CD8-positive, alpha-beta T cell (primary cell): ENCODE measurements at regions of chr2 and their contacts with region 1.

Region 1: DNA sequence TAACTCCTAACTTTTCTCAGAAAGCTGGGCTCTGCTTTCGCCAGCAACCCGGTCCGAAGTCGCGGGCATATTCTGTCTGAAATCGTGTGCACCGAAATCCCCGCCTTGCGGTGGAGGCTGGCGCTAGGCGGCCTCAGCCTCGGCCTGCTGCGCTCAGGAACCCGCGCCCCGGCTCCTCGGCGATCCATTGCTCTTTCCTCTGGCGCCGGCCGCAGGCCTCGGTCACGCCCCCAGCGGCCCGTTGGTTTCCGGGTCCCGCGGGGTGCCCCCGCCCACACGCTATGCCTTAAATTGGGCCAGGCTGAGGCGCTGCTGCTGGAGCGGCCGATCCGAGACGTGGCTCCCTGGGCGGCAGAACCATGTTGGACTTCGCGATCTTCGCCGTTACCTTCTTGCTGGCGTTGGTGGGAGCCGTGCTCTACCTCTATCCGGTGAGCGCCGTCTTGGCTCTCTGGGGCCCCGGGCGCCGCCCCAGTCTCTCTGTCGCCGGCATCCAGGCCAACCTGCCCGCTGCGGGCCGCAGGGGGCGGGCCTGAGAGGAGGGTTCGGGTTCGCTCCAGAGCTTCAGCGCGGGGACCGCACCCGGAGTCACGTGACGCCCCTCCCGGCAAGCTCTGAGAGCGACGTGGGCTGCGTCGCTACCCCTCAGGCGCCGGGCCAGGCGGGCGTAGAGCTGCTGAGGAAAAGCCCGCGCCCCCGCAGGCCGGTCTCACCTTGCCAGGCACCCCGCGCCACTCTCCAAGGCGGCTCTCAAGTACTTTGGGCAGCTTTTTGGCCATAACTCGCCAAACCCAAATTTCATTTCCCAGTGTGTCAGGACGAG is at the start of gene CYP20A1:
- DNase-seq: peak; percentile 95 to 98 (median 97)
- ATAC-seq: peak; percentile 81
- H3K4me3 ChIP-seq: peak within 1 kb of the TSS; percentile 88 to 89
- H3K4me3 Mint-ChIP-seq: peak within 1 kb of the TSS; percentile 99
- H3K27ac ChIP-seq: peak within 1 kb of the TSS; percentile 92 to 98
- H3K27ac Mint-ChIP-seq: peak within 1 kb of the TSS; percentile 100
- H3K4me1 ChIP-seq: peaks cover 15% of the 10 kb centered on the region
- H3K4me1 Mint-ChIP-seq: peaks cover 30% of the 10 kb centered on the region
- H3K27me3 ChIP-seq: no peaks in the 10 kb centered on the region
- H3K27me3 Mint-ChIP-seq: no peaks in the 10 kb centered on the region
- CTCF ChIP-seq: no peak
- total RNA-seq, gene CYP20A1: 22.6 to 24.6 TPM

Region 2: DNA sequence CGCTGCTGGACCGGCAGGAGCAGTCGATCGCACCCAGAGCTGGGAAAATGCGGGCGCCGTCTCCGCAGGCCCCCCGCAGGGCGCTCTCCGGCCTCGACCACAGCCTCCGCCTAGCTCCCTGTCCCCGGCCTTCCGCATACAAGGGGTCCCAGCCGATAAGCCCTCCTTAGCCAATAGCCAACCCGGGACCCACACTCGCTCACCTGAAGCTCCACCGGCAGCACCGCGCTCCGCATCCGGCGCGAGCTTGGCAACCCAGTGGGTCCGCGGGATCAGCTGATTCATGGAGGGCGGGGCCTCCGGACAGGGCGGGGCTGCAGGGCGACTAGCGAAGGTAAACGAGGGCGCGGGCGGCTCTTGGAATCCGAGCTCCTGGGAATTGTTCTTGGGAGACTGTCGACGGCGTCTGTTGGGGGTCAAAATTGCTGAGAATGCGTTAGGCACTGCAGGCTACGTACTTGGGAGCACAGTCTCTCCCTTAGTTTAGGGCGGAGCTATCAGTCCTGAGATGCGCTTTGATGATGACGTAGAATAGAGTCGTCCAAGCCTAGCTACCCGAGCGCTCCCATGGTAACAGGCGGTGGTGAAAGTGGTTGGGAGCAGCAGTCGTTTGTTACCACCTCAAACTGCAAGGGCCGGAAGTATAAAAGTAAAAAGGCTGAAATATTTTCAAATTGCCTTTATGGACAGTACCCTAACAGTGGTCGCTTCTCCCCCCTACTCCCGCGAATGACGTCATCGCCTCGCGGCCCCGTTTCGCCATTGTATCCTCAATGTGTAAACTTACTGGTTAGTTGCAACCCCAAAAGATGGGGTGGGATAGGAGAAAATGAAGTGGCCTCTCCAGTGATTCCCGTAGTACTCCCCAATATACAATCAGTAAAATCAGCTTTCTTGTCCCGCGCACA is 1458.0 kb before region 1 on chr2 and contains the start of gene ALS2:
- CTCF ChIA-PET with region 1: no interaction called
- POLR2A ChIA-PET with region 1: no interaction called
- intact Hi-C with region 1: loop called in 1 of 2 experiments (anchors 5 kb)
- DNase-seq: peak; percentile 88 to 97 (median 94)
- ATAC-seq: peak; percentile 91
- H3K4me3 ChIP-seq: peak within 1 kb of the TSS; percentile 80 to 89
- H3K4me3 Mint-ChIP-seq: peak within 1 kb of the TSS; percentile 98
- H3K27ac ChIP-seq: peak within 1 kb of the TSS; percentile 94
- H3K27ac Mint-ChIP-seq: peak within 1 kb of the TSS; percentile 98
- H3K4me1 ChIP-seq: peaks cover 16% of the 10 kb centered on the region
- H3K4me1 Mint-ChIP-seq: peaks cover 27% of the 10 kb centered on the region
- H3K27me3 ChIP-seq: no peaks in the 10 kb centered on the region
- H3K27me3 Mint-ChIP-seq: peaks cover 3% of the 10 kb centered on the region
- CTCF ChIP-seq: no peak
- total RNA-seq, gene ALS2: 6.6 to 9.0 TPM

Region 3: DNA sequence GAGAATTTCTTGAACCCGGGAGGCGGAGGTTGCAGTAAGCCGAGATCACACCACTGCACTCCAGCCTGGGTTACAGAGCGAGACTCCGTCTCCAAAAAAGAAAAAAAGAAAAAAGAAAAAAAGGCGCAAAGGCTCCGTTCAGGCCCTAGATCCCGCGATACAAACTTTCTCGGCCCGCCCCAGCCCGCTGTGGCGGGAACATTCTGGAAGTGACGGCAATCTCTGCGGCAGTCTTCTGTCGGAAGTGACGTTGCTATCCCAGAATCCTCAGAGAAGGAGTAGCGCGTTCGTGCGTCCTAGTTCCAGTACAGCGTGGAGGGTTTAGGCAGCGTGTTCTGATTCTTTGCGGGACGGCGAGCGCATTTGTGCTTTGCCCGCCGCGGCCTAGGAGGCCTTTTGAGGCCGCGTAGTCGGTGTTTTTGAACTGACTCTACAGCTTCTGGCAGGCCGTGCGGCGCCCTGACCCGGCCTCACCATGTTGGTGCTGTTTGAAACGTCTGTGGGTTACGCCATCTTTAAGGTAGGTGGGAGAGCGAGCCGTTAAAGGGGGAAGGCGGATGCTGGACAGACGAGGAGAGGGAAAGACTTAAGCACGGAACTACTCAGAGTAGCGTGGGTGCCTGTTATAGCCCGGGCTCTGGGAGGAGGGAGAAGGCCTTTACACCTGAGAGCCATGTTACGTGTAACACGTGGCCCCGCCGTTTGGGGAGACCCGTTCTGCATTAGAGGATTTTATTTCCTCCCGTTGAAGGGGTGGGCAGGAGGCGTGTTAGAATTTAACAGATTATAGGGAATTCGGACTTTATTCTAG is 973.2 kb before region 1 on chr2 and contains the start of gene NOP58:
- CTCF ChIA-PET with region 1: no interaction called
- POLR2A ChIA-PET with region 1: interaction called, 3 read pairs
- intact Hi-C with region 1: loop called in 1 of 2 experiments (anchors 10 kb)
- DNase-seq: peak; percentile 80 to 97 (median 87)
- ATAC-seq: peak; percentile 75
- H3K4me3 ChIP-seq: peak within 1 kb of the TSS; percentile 80 to 100
- H3K4me3 Mint-ChIP-seq: peak within 1 kb of the TSS; percentile 52
- H3K27ac ChIP-seq: peak within 1 kb of the TSS; percentile 97 to 98
- H3K27ac Mint-ChIP-seq: peak within 1 kb of the TSS; percentile 43
- H3K4me1 ChIP-seq: peaks cover 18% of the 10 kb centered on the region
- H3K4me1 Mint-ChIP-seq: peaks cover 21% of the 10 kb centered on the region
- H3K27me3 ChIP-seq: no peaks in the 10 kb centered on the region
- H3K27me3 Mint-ChIP-seq: no peaks in the 10 kb centered on the region
- CTCF ChIP-seq: no peak
- total RNA-seq, gene NOP58: 345 to 352 TPM

Region 4: DNA sequence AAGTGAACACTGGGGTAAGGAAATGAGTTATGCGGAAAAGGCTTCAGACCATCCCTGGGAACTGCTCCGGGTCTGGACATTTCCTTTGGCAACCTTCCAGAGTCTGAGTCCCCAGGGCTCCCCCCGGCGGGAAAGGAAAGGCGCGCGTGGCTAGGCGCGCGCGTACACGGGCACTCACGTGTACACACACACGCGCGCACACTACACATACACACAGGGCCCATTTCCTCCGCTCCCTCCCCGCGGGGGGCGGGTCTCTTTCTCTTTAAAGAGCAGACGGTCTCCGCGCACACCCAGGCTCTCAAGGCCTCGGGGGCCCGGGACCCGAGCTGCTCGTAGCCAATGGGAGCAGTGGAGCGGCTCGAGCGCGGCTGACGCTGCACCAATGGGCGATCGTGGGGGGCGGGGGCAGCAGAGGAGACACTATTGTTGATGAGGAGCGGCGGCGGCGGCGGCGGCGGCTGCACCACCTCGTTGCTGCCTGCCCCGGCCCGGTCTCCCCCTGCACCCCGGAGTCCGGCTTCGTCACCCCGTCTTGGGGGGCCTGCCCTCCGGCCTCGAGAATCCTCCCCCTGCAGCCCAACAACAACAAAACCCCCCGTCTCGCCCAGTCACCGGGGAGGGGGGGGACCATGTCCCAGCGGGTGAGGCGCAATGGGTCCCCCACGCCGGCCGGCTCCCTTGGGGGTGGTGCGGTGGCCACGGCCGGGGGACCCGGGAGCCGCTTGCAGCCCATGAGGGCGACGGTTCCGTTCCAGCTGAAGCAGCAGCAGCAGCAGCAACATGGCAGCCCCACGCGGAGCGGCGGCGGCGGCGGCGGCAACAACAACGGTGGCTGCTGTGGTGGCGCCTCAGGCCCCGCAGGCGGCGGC is 604.1 kb before region 1 on chr2 and contains the start of gene FAM117B:
- CTCF ChIA-PET with region 1: no interaction called
- POLR2A ChIA-PET with region 1: interaction called, 12 read pairs
- intact Hi-C with region 1: no loop called
- DNase-seq: peak; percentile 97 to 99 (median 98)
- ATAC-seq: peak; percentile 87
- H3K4me3 ChIP-seq: peak within 1 kb of the TSS; percentile 77 to 87
- H3K4me3 Mint-ChIP-seq: peak within 1 kb of the TSS; percentile 98
- H3K27ac ChIP-seq: peak within 1 kb of the TSS; percentile 76 to 89
- H3K27ac Mint-ChIP-seq: peak within 1 kb of the TSS; percentile 99
- H3K4me1 ChIP-seq: peaks cover 29% of the 10 kb centered on the region
- H3K4me1 Mint-ChIP-seq: peaks cover 52% of the 10 kb centered on the region
- H3K27me3 ChIP-seq: no peaks in the 10 kb centered on the region
- H3K27me3 Mint-ChIP-seq: no peaks in the 10 kb centered on the region
- CTCF ChIP-seq: no peak
- total RNA-seq, gene FAM117B: 40.0 to 45.8 TPM

Region 5: DNA sequence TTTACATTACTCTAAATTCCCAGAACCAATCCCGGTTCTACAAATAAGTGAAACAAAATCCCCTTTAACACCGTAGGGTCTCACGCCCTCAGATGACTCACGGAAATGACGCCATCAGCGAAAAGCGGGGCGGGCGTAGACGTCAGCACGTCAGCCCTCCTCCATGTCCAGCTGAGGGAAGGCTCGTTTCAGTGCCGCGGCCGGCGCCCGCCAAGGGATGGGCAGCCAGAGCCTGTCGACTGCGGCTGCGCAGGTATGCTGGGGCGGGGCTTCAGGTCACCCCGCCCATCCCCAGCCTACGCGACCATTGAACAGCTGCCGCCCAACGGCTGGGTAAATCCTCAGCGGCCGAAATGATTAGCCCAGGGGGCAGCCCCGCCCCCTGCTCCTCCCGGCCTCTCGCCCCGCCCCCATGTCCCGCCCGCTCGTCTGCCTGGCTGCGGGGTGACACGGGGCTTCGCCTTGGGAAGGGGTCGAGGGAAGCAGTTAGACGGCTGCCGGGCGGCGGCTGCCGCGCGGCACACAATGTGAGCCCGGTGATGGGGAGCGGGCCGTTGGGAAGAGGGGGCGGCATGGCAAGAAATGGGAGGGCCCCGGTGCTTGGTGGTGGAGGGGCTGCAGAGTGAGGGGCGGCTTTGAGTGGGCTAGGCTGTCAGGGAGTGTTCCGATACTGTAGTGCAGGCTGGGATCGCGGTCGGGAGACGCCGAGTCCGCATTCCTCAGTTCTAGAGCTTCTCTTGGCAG is 224.3 kb before region 1 on chr2 and contains the start of gene NBEAL1:
- CTCF ChIA-PET with region 1: no interaction called
- POLR2A ChIA-PET with region 1: interaction called, 8 read pairs
- intact Hi-C with region 1: loop called in 1 of 2 experiments (anchors 1 kb)
- DNase-seq: peak; percentile 92 to 99 (median 95)
- ATAC-seq: peak; percentile 90
- H3K4me3 ChIP-seq: peak within 1 kb of the TSS; percentile 77 to 97
- H3K4me3 Mint-ChIP-seq: peak within 1 kb of the TSS; percentile 88
- H3K27ac ChIP-seq: peak within 1 kb of the TSS; percentile 86 to 89
- H3K27ac Mint-ChIP-seq: peak within 1 kb of the TSS; percentile 92
- H3K4me1 ChIP-seq: peaks cover 37% of the 10 kb centered on the region
- H3K4me1 Mint-ChIP-seq: peaks cover 46% of the 10 kb centered on the region
- H3K27me3 ChIP-seq: no peaks in the 10 kb centered on the region
- H3K27me3 Mint-ChIP-seq: no peaks in the 10 kb centered on the region
- CTCF ChIP-seq: no peak
- total RNA-seq, gene NBEAL1: 11.2 to 13.2 TPM

Region 6: GRCh38 chr2:203122301-203122986 is 116.5 kb before region 1 on chr2:
- CTCF ChIA-PET with region 1: no interaction called
- POLR2A ChIA-PET with region 1: no interaction called
- intact Hi-C with region 1: no loop called
- DNase-seq: peak in 2 of 9 experiments; percentile 1 to 8
- ATAC-seq: no peak
- H3K4me3 ChIP-seq: no peak overlapping the region
- H3K4me3 Mint-ChIP-seq: no peak overlapping the region
- H3K27ac ChIP-seq: no peak overlapping the region
- H3K27ac Mint-ChIP-seq: no peak overlapping the region
- H3K4me1 ChIP-seq: no peaks in the 10 kb centered on the region
- H3K4me1 Mint-ChIP-seq: no peaks in the 10 kb centered on the region
- H3K27me3 ChIP-seq: no peaks in the 10 kb centered on the region
- H3K27me3 Mint-ChIP-seq: no peaks in the 10 kb centered on the region
- CTCF ChIP-seq: no peak

Region 7: GRCh38 chr2:203209538-203209937 is 29.4 kb before region 1 on chr2:
- CTCF ChIA-PET with region 1: no interaction called
- POLR2A ChIA-PET with region 1: no interaction called
- intact Hi-C with region 1: no loop called
- DNase-seq: no peak
- ATAC-seq: no peak
- H3K4me3 ChIP-seq: no peak overlapping the region
- H3K4me3 Mint-ChIP-seq: no peak overlapping the region
- H3K27ac ChIP-seq: no peak overlapping the region
- H3K27ac Mint-ChIP-seq: no peak overlapping the region
- H3K4me1 ChIP-seq: peaks cover 3% of the 10 kb centered on the region
- H3K4me1 Mint-ChIP-seq: peaks cover 7% of the 10 kb centered on the region
- H3K27me3 ChIP-seq: no peaks in the 10 kb centered on the region
- H3K27me3 Mint-ChIP-seq: no peaks in the 10 kb centered on the region
- CTCF ChIP-seq: no peak

Region 8: GRCh38 chr2:203498161-203498560 is 259.2 kb after region 1 on chr2:
- CTCF ChIA-PET with region 1: no interaction called
- POLR2A ChIA-PET with region 1: no interaction called
- intact Hi-C with region 1: no loop called
- DNase-seq: peak in 1 of 9 experiments; percentile 23
- ATAC-seq: no peak
- H3K4me3 ChIP-seq: no peak overlapping the region
- H3K4me3 Mint-ChIP-seq: no peak overlapping the region
- H3K27ac ChIP-seq: no peak overlapping the region
- H3K27ac Mint-ChIP-seq: no peak overlapping the region
- H3K4me1 ChIP-seq: no peaks in the 10 kb centered on the region
- H3K4me1 Mint-ChIP-seq: peaks cover 16% of the 10 kb centered on the region
- H3K27me3 ChIP-seq: no peaks in the 10 kb centered on the region
- H3K27me3 Mint-ChIP-seq: no peaks in the 10 kb centered on the region
- CTCF ChIP-seq: no peak

Region 9: DNA sequence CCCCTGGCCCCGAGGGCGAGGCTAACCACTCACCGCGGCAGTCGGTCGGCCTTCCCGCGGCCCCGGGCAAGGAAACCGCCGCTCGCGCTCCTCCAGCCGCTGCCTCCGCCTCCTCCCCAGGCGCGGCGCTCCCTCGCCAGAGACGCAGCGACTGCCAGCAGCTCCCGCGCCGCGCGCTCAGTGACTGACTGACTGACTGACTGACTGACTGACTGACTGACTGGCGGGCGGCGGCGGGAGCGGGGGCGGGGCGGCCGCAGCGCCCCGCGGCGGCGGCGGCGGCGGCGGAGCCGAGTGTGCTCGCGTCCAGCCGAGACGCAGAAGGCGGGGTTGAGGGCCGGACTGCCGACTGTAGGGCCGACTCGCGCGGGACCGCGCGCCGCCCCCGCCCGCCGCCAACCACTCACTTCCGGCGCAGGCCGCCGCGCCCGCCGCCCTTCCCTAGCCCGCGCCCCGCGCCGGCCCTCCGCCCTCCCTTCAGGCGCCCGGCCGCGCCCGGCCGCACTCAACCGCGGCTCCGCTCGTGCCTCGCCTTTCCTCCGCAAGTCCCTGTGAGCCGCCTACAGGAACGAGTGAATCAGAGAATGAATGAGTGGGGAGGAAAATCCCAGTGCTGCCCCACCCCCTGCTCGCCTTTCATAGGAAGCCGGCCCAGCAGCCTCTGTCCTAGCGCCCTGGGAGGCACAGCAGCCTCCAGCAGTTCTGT is 296.3 kb after region 1 on chr2 and contains the start of gene RAPH1:
- CTCF ChIA-PET with region 1: no interaction called
- POLR2A ChIA-PET with region 1: no interaction called
- intact Hi-C with region 1: loop called in 1 of 2 experiments (anchors 2 kb)
- DNase-seq: peak; percentile 3 to 65 (median 54)
- ATAC-seq: peak; percentile 62
- H3K4me3 ChIP-seq: peak within 1 kb of the TSS; percentile 49 to 50
- H3K4me3 Mint-ChIP-seq: peak within 1 kb of the TSS; percentile 86
- H3K27ac ChIP-seq: no peak within 1 kb of the TSS
- H3K27ac Mint-ChIP-seq: no peak within 1 kb of the TSS
- H3K4me1 ChIP-seq: peaks cover 15% of the 10 kb centered on the region
- H3K4me1 Mint-ChIP-seq: peaks cover 27% of the 10 kb centered on the region
- H3K27me3 ChIP-seq: peaks cover 0 to 7% of the 10 kb centered on the region in 2 experiments
- H3K27me3 Mint-ChIP-seq: peaks cover 28% of the 10 kb centered on the region
- CTCF ChIP-seq: no peak
- total RNA-seq, gene RAPH1: 1.8 to 1.9 TPM